GM23248 (cell line): ENCODE measurements at regions of chr1 and their contacts with region 1.

Region 1: DNA sequence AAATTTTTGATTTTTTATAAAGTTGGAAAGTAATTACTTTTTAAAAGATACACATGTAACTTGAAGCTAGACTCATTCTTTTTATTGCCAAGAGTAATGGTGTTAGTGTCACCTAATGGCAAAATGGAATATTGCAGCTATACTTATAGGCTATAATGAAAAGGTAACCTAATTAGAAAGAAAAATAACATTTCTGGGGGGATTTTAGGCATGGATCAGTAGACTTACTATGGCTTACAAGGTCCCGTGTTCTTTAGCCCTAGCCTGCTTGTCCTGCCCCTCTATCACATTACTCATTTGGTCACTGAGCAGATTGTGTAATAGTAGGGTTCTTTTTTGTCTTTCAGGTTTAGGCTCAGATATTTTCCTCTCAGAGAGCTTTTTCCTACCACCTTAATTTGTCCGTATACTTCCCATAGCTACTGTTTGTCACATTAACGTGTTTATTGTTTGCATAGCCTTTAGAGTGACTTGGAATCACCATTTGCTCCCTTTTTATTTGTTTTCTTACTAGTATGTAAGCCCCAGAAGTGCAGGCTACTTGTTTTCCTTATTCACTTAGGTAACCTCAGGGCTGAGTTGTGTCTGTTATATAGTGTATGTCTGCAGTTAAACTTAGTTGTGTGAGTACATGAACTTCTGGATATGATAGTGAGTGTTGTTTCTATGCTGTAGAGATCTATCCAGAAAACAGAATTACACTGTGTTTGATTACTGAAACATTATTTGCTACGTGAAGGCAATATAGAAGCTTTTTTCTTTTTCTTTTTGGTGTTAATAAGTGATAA is 58.7 kb downstream of the RABGAP1L start:
- DNase-seq: peak; percentile 59
- H3K4me3 ChIP-seq: no peak overlapping the region
- H3K27ac ChIP-seq: no peak overlapping the region
- H3K4me1 ChIP-seq: peaks cover 7% of the 10 kb centered on the region; the same call in 1 of the 2 replicates
- H3K27me3 ChIP-seq: no peaks in the 10 kb centered on the region

Region 2: GRCh38 chr1:173900427-173900826 is 317.6 kb before region 1 on chr1:
- in situ Hi-C with region 1: no loop called
- DNase-seq: no peak
- H3K4me3 ChIP-seq: no peak overlapping the region
- H3K27ac ChIP-seq: no peak overlapping the region
- H3K4me1 ChIP-seq: no peaks in the 10 kb centered on the region
- H3K27me3 ChIP-seq: no peaks in the 10 kb centered on the region

Region 3: DNA sequence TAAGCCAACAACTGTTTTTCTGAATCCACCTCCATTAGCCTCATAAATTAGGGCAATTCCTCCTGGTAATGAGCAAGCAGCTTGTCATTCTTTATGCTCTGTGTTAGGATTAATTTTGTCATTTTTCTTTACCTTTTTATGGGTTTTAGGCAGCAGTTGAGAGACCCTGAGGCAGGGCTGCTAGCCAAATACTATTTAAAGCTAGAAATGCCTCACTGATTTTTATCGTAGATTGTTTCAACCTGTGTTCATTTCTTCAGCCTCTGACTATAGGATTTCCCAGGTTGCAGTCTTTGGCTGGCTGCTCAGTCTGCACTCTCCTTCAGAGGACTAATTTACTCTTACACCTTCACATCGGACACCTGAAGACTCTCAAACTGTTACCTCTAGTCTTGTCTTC is 120.6 kb before region 1 on chr1:
- in situ Hi-C with region 1: loop called (anchors 10 kb)
- DNase-seq: no peak
- H3K4me3 ChIP-seq: no peak overlapping the region
- H3K27ac ChIP-seq: no peak overlapping the region
- H3K4me1 ChIP-seq: no peaks in the 10 kb centered on the region
- H3K27me3 ChIP-seq: peaks cover 7% of the 10 kb centered on the region; the same call in 1 of the 2 replicates

Region 4: GRCh38 chr1:174858301-174858700 is 640.3 kb after region 1 on chr1:
- in situ Hi-C with region 1: no loop called
- DNase-seq: peak; percentile 31
- H3K4me3 ChIP-seq: no peak overlapping the region
- H3K27ac ChIP-seq: no peak overlapping the region
- H3K4me1 ChIP-seq: no peaks in the 10 kb centered on the region
- H3K27me3 ChIP-seq: no peaks in the 10 kb centered on the region